Head of caudate nucleus (tissue), 42 donors: ENCODE measurements at regions of chr5 and their contacts with region 1.

Region 1: GRCh38 chr5:125149527-125149926 is 403.1 kb upstream of the ZNF608 start:
- DNase-seq: no peak

Region 2: GRCh38 chr5:124677374-124678351 is 471.9 kb before region 1 on chr5:
- intact Hi-C with region 1: loop called (anchors 5 kb)
- DNase-seq: peak in 39 of 42 donors; percentile 24 to 85 (median 59)